Spleen (tissue), 13 donors: ENCODE measurements at regions of chr10 and their contacts with region 1.

Region 1: DNA sequence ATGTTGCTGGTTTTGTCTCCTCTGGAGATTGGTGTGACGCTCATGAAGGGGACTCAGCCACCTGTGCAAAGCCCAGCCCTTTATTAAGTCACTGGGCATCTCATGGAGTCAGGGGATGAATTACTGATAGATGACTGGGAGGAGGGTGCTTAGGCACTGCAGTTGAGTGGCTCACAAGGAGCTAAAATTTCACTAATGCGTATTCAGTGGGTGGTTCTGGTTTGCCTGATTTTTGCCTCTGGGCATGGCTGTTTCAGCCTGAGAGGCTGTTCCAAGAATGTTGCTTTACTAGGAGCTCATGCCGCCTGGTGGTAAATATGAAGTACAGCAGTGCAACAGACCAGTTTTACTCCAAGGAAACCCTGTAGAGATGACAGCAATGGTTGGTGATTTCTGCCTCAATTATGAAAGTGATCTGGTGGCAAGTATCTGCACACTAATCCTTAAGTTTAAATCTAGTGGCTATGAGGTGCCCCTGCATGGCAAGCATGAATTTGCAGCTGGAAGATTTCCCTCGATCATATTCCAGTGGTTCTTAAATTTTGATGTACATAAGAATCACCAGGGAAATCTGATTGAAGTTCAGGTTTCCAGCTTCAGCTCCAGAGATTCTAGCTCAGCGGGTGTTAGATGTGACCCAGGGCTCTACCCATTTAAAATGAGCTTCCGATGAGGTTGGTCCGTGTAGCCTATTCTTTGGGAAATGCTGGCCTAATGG is 19.9 kb downstream of the ACTA2 start:
- DNase-seq: no peak
- H3K4me3 ChIP-seq: no peak overlapping the region
- H3K27ac ChIP-seq: peak overlapping the region in 3 of 8 donors; percentile 1 to 41 (median 5)
- H3K4me1 ChIP-seq: peaks cover 0 to 44% (median 22%) of the 10 kb centered on the region in 6 donors
- H3K27me3 ChIP-seq: no peaks in the 10 kb centered on the region
- CTCF ChIP-seq: peak; percentile 75 to 94 (median 86)
- POLR2A ChIP-seq: no peak

Region 2: GRCh38 chr10:88835096-88835909 is 97.4 kb before region 1 on chr10:
- intact Hi-C with region 1: loop called (anchors 2 kb)
- DNase-seq: peak; percentile 94
- H3K4me3 ChIP-seq: peak overlapping the region in 1 of 8 donors; percentile 8
- H3K27ac ChIP-seq: peak overlapping the region in 7 of 8 donors; percentile 32 to 80 (median 66)
- H3K4me1 ChIP-seq: peaks cover 0 to 62% (median 22%) of the 10 kb centered on the region in 6 donors
- H3K27me3 ChIP-seq: no peaks in the 10 kb centered on the region
- CTCF ChIP-seq: peak; percentile 84 to 96 (median 92)
- POLR2A ChIP-seq: no peak

Region 3: GRCh38 chr10:88880282-88881076 is 52.2 kb before region 1 on chr10:
- intact Hi-C with region 1: no loop called
- DNase-seq: peak; percentile 97
- H3K4me3 ChIP-seq: peak overlapping the region; percentile 52 to 90 (median 81)
- H3K27ac ChIP-seq: peak overlapping the region; percentile 93 to 98 (median 96)
- H3K4me1 ChIP-seq: peaks cover 22 to 70% (median 63%) of the 10 kb centered on the region in 6 donors
- H3K27me3 ChIP-seq: no peaks in the 10 kb centered on the region
- CTCF ChIP-seq: peak in 6 of 11 experiments; percentile 4 to 46 (median 13)
- POLR2A ChIP-seq: peak; percentile 25 to 70 (median 65)

Region 4: GRCh38 chr10:88986549-88987242 is 54.0 kb after region 1 on chr10:
- intact Hi-C with region 1: loop called (anchors 2 kb)
- DNase-seq: no peak
- H3K4me3 ChIP-seq: no peak overlapping the region
- H3K27ac ChIP-seq: peak overlapping the region in 7 of 8 donors; percentile 30 to 99 (median 96)
- H3K4me1 ChIP-seq: peaks cover 22 to 78% (median 35%) of the 10 kb centered on the region in 6 donors
- H3K27me3 ChIP-seq: no peaks in the 10 kb centered on the region
- CTCF ChIP-seq: peak in 9 of 11 experiments; percentile 46 to 73 (median 57)
- POLR2A ChIP-seq: no peak

Region 5: GRCh38 chr10:89213191-89213808 is 280.6 kb after region 1 on chr10:
- intact Hi-C with region 1: loop called (anchors 5 kb)
- DNase-seq: no peak
- H3K4me3 ChIP-seq: no peak overlapping the region
- H3K27ac ChIP-seq: peak overlapping the region in 3 of 8 donors; percentile 26 to 35 (median 31)
- H3K4me1 ChIP-seq: peaks cover 14 to 36% (median 23%) of the 10 kb centered on the region in 6 donors
- H3K27me3 ChIP-seq: peaks cover 0 to 12% (median 3%) of the 10 kb centered on the region in 7 donors
- CTCF ChIP-seq: peak; percentile 10 to 86 (median 58)
- POLR2A ChIP-seq: no peak